ENCODE measurements at regions of chr3 and their contacts with region 1.

Region 1: DNA sequence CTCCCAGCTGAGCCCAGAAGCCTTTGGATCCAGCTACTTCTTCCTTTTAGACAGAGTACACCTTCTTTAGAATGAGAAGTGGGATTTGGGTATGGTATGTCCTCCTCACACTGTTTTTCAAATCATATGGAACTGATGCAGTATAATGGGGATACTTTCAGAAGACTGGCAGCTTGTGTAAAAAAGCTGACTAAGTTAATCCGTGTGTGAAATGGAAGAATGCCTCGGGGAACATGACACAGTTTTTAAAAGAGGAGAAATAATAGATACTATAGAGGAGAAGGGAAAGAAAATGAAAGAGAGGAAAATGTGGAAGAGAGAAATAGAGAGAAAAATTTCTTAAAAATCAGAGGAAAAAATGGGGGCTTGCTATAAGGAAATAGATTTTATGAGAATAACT is 47.7 kb downstream of the TUSC7 start:
- DNase-seq: no peak
- ATAC-seq: no peak
- H3K4me3 ChIP-seq: no peak overlapping the region
- H3K4me3 Mint-ChIP-seq: no peak overlapping the region
- H3K27ac ChIP-seq: no peak overlapping the region
- H3K27ac Mint-ChIP-seq: no peak overlapping the region
- H3K4me1 ChIP-seq: no peaks in the 10 kb centered on the region
- H3K4me1 Mint-ChIP-seq: no peaks in the 10 kb centered on the region
- H3K27me3 ChIP-seq: no peaks in the 10 kb centered on the region
- H3K27me3 Mint-ChIP-seq: peaks cover 11% of the 10 kb centered on the region
- CTCF ChIP-seq: no peak

Region 2: GRCh38 chr3:116140100-116140689 is 617.1 kb before region 1 on chr3:
- CTCF ChIA-PET with region 1: no interaction called
- POLR2A ChIA-PET with region 1: no interaction called
- intact Hi-C with region 1: loop called (anchors 5 kb)
- DNase-seq: no peak
- ATAC-seq: no peak
- H3K4me3 ChIP-seq: no peak overlapping the region
- H3K4me3 Mint-ChIP-seq: no peak overlapping the region
- H3K27ac ChIP-seq: no peak overlapping the region
- H3K27ac Mint-ChIP-seq: no peak overlapping the region
- H3K4me1 ChIP-seq: no peaks in the 10 kb centered on the region
- H3K4me1 Mint-ChIP-seq: no peaks in the 10 kb centered on the region
- H3K27me3 ChIP-seq: no peaks in the 10 kb centered on the region
- H3K27me3 Mint-ChIP-seq: no peaks in the 10 kb centered on the region
- CTCF ChIP-seq: peak; percentile 75

Region 3: DNA sequence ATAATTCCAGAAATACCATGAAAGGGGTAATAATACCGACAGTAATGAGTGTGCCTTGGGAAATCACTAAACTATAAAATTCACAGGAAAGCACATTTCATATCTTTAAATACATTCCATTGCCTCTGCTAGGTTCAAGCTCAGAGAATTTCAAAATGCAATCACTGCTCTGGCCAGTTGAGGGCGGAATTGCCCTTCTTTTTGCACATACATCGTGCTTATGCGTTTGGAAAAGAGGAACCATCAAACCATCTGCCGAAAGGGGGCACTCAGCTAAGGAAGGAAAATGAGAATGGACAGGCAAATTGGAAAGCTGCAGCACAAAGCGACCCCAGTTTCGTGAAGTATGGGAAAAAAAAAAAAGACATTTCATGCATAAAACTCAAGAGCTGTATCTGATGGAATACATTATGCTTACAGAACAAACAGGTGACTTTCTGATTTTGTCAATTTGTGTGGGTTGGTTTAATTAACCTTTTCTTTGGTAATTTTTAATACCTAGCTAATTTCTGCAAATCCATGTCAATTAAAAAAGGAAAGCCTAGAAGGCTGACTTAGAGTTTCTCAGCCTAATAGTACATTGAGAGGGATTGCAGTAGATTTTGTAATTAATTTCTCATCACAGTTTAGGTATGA is 13.6 kb after region 1 on chr3:
- CTCF ChIA-PET with region 1: interaction called, 11 read pairs
- POLR2A ChIA-PET with region 1: no interaction called
- intact Hi-C with region 1: no loop called
- DNase-seq: peak; percentile 70
- ATAC-seq: peak; percentile 54
- H3K4me3 ChIP-seq: no peak overlapping the region
- H3K4me3 Mint-ChIP-seq: no peak overlapping the region
- H3K27ac ChIP-seq: no peak overlapping the region
- H3K27ac Mint-ChIP-seq: no peak overlapping the region
- H3K4me1 ChIP-seq: no peaks in the 10 kb centered on the region
- H3K4me1 Mint-ChIP-seq: peaks cover 2% of the 10 kb centered on the region
- H3K27me3 ChIP-seq: peaks cover 0 to 3% (median 0%) of the 10 kb centered on the region in 4 experiments
- H3K27me3 Mint-ChIP-seq: peaks cover 4% of the 10 kb centered on the region
- CTCF ChIP-seq: peak; percentile 91

Region 4: DNA sequence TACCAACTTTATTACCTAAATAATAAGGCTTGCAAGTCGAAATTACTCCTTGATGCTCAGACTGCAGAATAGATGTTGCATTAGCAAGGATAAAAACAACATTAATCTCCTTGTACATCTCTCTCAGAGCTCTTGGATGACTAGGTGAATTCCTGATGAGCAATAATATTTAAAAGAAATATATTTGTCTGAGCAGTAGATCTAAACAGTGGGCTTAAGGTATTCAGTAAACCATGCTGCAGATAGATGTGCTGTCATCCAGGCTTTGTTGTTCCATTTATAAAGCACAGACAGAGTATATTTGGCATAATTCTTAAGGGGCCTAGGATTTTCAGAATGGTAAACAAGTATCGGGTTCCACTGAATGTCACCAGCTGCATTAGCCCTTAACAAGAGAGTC is 209.3 kb after region 1 on chr3:
- CTCF ChIA-PET with region 1: no interaction called
- POLR2A ChIA-PET with region 1: no interaction called
- intact Hi-C with region 1: no loop called
- DNase-seq: no peak
- ATAC-seq: no peak
- H3K4me3 ChIP-seq: no peak overlapping the region
- H3K4me3 Mint-ChIP-seq: no peak overlapping the region
- H3K27ac ChIP-seq: no peak overlapping the region
- H3K27ac Mint-ChIP-seq: no peak overlapping the region
- H3K4me1 ChIP-seq: no peaks in the 10 kb centered on the region
- H3K4me1 Mint-ChIP-seq: no peaks in the 10 kb centered on the region
- H3K27me3 ChIP-seq: no peaks in the 10 kb centered on the region
- H3K27me3 Mint-ChIP-seq: no peaks in the 10 kb centered on the region
- CTCF ChIP-seq: no peak

Region 5: GRCh38 chr3:117645561-117646242 is 888.4 kb after region 1 on chr3:
- CTCF ChIA-PET with region 1: no interaction called
- POLR2A ChIA-PET with region 1: no interaction called
- intact Hi-C with region 1: no loop called
- DNase-seq: no peak
- ATAC-seq: no peak
- H3K4me3 ChIP-seq: no peak overlapping the region
- H3K4me3 Mint-ChIP-seq: no peak overlapping the region
- H3K27ac ChIP-seq: no peak overlapping the region
- H3K27ac Mint-ChIP-seq: no peak overlapping the region
- H3K4me1 ChIP-seq: no peaks in the 10 kb centered on the region
- H3K4me1 Mint-ChIP-seq: no peaks in the 10 kb centered on the region
- H3K27me3 ChIP-seq: no peaks in the 10 kb centered on the region
- H3K27me3 Mint-ChIP-seq: no peaks in the 10 kb centered on the region
- CTCF ChIP-seq: no peak